Activated naive CD4-positive, alpha-beta T cell treated with anti-CD3 and anti-CD28 coated beads for 36 hours (primary cell): ENCODE measurements at regions of chr5 and their contacts with region 1.

Region 1: DNA sequence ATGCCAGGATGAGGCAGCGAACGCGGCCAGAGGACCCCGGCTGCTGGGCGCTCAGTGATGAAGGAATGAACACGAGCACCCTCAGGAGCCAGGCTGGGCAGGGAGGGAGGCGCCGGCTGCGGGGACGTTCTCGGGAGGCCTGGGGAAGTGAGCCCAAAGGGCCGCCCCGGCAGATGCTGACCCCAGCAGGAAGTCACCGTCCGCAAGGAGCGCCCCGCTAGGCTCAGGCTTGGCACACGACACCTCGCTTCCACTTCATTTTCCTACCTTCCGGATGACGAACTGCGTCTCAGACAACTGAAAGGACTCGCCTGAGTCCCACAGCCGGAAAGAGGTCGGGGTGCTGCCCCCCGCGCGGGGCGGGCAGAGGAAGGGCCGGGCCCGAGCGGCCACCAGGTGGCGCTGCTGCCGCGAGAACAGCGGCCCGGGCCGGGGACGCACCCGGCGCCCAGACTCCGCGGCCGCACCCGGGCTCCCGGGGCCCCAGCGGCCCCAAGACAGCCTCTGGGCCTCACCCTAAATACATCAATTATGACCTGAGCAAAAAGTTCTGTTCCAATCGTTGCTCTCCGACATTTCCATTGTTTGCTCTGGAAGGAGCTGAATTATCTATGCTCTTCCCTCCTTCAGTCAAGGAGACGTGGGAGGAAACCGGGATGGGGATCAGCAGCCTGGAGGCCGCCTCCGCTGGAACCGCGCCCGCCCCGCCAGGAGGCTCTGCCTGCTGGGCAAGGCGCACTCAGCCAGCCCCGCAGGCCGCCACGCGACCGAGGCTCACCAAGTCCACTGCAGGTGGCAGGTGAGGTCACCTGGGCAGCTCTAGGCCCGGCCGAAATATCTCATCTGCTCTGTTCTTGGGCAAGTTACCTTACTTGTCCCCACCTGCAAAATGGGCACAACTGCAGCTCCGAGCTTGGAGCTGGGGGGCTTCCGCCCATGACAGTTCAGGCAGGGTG is 107.0 kb downstream of the ZNF354C start:
- DNase-seq: peak; percentile 76
- H3K4me3 Mint-ChIP-seq: no peak overlapping the region
- H3K27ac Mint-ChIP-seq: no peak overlapping the region
- H3K4me1 Mint-ChIP-seq: peaks cover 3% of the 10 kb centered on the region
- H3K27me3 Mint-ChIP-seq: peaks cover 5% of the 10 kb centered on the region

Region 2: DNA sequence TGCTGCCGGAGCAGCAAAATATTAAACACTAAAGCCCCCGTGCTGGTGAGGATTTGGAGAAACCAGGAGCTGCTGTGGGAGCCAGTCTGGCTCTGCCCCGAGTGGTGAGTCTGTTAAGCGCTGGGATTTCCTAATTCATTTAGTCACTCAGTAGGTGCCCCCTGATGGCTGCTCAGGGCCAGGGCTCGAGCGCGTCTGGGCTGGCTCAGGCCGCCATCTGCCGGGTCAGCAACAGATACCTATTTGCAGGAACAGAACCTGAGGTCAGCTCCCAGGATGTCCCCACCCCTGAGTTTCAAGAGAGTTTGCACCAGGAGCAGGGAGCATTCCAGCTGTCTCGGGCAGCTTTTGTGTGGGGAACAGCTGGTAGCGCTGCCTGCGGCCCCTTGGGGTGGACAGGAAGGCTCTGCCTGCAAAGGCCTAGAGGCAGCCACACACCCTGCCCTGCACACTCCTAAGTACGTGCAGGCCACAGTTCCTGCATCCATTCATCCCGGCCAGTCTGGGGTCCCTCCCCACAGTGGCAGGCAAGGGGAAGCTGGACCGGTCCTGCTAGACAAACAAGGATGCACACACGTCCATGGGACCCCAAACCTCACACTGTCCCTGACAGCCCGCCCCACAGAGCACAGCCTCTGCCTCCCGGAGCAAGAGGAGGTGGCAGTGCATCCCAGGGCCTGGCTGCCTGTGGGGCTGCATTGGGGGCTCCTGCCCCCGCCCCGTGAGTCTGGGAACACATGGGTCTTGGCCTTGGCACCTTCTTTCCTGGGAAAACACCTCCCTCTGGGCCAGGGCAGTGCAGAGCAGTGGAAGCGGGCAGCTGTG is 94.3 kb after region 1 on chr5:
- CTCF ChIA-PET with region 1: no interaction called
- intact Hi-C with region 1: loop called (anchors 2 kb)
- DNase-seq: peak; percentile 25
- H3K4me3 Mint-ChIP-seq: no peak overlapping the region
- H3K27ac Mint-ChIP-seq: no peak overlapping the region
- H3K4me1 Mint-ChIP-seq: no peaks in the 10 kb centered on the region
- H3K27me3 Mint-ChIP-seq: peaks cover 4% of the 10 kb centered on the region

Region 3: DNA sequence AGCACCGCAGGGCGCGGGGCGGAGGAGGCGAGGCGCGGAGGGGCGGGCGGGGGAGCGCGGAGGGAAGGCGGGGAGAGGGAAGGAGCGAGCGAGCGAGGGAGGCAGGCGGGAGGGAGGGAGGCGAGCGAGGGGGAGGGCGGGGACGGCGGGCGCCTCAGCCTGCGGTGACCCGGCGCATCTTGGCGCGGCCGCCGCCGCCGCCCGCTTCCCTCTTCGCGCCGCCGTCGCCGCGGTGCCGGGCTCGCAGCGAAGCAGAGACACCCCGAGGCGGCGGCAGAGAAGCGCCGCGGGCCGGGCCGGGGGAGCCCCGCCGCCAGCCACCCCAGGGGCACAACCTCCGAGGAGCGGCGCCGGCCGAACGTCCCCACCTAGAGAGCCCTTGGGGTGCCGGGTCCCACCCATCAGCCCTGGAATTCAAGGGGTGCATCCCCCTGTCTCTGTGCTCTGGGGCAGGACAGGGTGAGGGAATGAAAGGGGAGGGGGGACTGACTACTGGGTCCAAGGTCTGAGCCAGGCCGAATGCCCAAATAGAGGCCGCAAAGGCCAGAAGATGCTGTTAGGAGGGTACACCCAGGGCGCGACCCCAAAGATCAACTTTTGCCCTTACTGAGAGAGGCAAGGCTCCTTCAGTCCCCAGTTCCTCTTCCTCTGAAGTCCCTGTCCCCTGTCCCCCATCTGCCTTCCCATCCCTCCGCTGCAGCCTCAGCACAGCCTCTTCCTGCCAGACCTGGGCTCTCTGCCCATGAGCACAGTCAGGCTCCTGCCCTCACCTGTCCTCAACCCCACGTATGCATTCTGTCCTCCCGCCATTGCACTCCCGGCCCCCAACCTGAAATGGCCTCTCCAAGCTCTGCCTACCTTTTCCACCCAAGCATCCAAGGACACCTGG is 178.5 kb after region 1 on chr5 and contains the start of gene ADAMTS2:
- CTCF ChIA-PET with region 1: no interaction called
- intact Hi-C with region 1: loop called (anchors 10 kb)
- DNase-seq: peak; percentile 22
- H3K4me3 Mint-ChIP-seq: peak within 1 kb of the TSS; percentile 34
- H3K27ac Mint-ChIP-seq: no peak within 1 kb of the TSS
- H3K4me1 Mint-ChIP-seq: peaks cover 4% of the 10 kb centered on the region
- H3K27me3 Mint-ChIP-seq: peaks cover 48% of the 10 kb centered on the region
- total RNA-seq, gene ADAMTS2: not detected

Region 4: GRCh38 chr5:179495906-179496455 is 328.8 kb after region 1 on chr5:
- CTCF ChIA-PET with region 1: interaction called, 10 read pairs
- intact Hi-C with region 1: loop called (anchors 1 kb)
- DNase-seq: peak; percentile 20
- H3K4me3 Mint-ChIP-seq: no peak overlapping the region
- H3K27ac Mint-ChIP-seq: no peak overlapping the region
- H3K4me1 Mint-ChIP-seq: no peaks in the 10 kb centered on the region
- H3K27me3 Mint-ChIP-seq: no peaks in the 10 kb centered on the region

Region 5: GRCh38 chr5:179568721-179569120 is 401.6 kb after region 1 on chr5:
- CTCF ChIA-PET with region 1: no interaction called
- intact Hi-C with region 1: no loop called
- DNase-seq: no peak
- H3K4me3 Mint-ChIP-seq: no peak overlapping the region
- H3K27ac Mint-ChIP-seq: peak overlapping the region; percentile 31
- H3K4me1 Mint-ChIP-seq: no peaks in the 10 kb centered on the region
- H3K27me3 Mint-ChIP-seq: no peaks in the 10 kb centered on the region